Caco-2 (cell line): ENCODE measurements at regions of chr3 and their contacts with region 1.

Region 1: GRCh38 chr3:73086071-73086494 is 24.6 kb downstream of the EBLN2 start:
- DNase-seq: peak in 1 of 2 experiments; percentile 59
- H3K4me3 ChIP-seq: no peak overlapping the region
- H3K4me3 Mint-ChIP-seq: no peak overlapping the region
- H3K27ac Mint-ChIP-seq: no peak overlapping the region
- H3K4me1 ChIP-seq: no peaks in the 10 kb centered on the region
- H3K4me1 Mint-ChIP-seq: no peaks in the 10 kb centered on the region
- H3K27me3 ChIP-seq: no peaks in the 10 kb centered on the region
- H3K27me3 Mint-ChIP-seq: no peaks in the 10 kb centered on the region
- CTCF ChIP-seq: peak; percentile 79 to 85

Region 2: DNA sequence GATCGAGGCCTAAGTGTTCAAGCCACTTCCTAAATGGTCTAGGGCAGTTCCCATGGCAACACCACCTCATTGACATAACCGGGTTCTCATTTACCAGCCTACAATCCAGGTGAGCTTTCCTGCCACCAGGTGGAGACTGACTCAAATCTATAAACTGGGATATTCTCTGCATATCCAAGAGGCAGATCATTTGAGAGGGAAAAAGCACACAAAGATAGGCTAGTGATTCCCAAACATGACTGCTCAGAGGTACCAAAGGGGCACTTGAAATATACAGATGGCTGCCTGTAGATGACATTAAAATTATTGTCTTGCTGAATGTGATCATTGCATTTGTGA is 1159.9 kb before region 1 on chr3:
- CTCF ChIA-PET with region 1: no interaction called
- POLR2A ChIA-PET with region 1: no interaction called
- intact Hi-C with region 1: loop called (anchors 5 kb)
- DNase-seq: peak; percentile 67 to 71
- H3K4me3 ChIP-seq: no peak overlapping the region
- H3K4me3 Mint-ChIP-seq: no peak overlapping the region
- H3K27ac Mint-ChIP-seq: no peak overlapping the region
- H3K4me1 ChIP-seq: peaks cover 8% of the 10 kb centered on the region; the same call in 1 of the 2 replicates
- H3K4me1 Mint-ChIP-seq: peaks cover 9% of the 10 kb centered on the region
- H3K27me3 ChIP-seq: no peaks in the 10 kb centered on the region
- H3K27me3 Mint-ChIP-seq: peaks cover 8% of the 10 kb centered on the region
- CTCF ChIP-seq: peak; percentile 66 to 76

Region 3: DNA sequence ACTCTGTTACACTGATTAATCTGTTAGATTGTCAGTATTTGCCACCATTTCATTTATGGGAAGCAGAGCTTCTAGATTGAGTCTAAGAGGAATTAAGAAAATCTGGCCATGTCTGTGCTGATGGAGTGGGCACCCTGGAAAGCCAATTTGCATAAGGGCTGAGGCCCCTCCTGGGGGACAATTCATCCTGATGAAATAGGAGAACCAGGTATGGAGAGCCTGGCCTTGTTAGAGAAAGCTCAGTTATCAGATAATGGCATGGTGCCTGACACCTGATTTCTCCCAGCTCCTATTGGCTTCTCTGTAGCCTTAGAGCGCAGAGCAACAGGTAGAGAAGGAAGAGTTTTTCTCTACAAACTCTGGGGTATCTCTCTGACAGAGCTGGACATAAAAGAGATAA is 89.6 kb after region 1 on chr3:
- CTCF ChIA-PET with region 1: no interaction called
- POLR2A ChIA-PET with region 1: no interaction called
- intact Hi-C with region 1: no loop called
- DNase-seq: no peak
- H3K4me3 ChIP-seq: no peak overlapping the region
- H3K4me3 Mint-ChIP-seq: no peak overlapping the region
- H3K27ac Mint-ChIP-seq: no peak overlapping the region
- H3K4me1 ChIP-seq: no peaks in the 10 kb centered on the region
- H3K4me1 Mint-ChIP-seq: peaks cover 5% of the 10 kb centered on the region
- H3K27me3 ChIP-seq: no peaks in the 10 kb centered on the region
- H3K27me3 Mint-ChIP-seq: no peaks in the 10 kb centered on the region
- CTCF ChIP-seq: no peak

Region 4: DNA sequence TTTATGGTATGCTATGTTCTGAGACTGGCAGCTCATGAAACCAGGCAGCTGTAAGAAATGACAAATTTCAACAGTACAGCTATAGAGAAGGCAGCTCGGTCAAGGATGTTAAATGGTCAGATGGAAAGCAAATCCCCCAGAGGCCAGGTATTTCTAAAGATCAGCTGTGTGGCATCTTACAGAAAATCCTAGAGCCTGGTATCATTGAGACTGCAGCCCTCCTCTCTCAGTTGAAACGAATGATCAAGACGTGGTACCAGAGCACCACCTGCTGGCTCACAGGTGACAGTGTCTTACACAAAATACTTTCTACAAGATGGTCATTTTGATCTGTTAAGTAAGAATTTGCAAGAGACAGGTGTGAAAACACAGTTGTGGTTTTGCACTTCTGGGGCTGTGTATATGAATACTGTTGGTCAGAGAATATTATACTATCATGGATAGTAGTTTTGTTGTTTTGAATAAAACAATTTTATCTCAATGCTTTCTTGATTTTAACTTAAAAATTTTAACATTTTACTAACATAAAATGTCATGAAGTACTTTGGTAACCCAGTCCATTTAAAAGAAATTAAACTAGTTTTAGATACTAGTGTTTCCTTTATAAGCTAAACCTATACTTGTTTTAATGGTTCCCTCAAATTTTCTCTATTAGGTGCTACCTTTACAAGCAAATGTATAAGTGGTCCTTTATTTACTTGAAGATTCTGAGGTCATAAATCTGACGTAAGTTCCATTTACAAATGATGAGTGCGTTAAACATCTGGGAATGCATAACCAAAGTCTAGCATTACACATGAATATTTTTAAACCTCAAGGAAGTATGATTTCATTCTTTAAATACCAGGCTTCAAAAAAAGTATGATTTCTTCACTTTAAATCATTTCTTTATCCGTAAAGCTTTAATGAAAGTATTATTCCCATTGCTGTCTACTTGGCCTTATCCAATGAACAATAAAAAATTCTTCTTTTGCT is 416.8 kb after region 1 on chr3:
- CTCF ChIA-PET with region 1: no interaction called
- POLR2A ChIA-PET with region 1: no interaction called
- intact Hi-C with region 1: no loop called
- DNase-seq: peak; percentile 71 to 72
- H3K4me3 ChIP-seq: no peak overlapping the region
- H3K4me3 Mint-ChIP-seq: no peak overlapping the region
- H3K27ac Mint-ChIP-seq: no peak overlapping the region
- H3K4me1 ChIP-seq: peaks cover 14% of the 10 kb centered on the region
- H3K4me1 Mint-ChIP-seq: no peaks in the 10 kb centered on the region
- H3K27me3 ChIP-seq: no peaks in the 10 kb centered on the region
- H3K27me3 Mint-ChIP-seq: no peaks in the 10 kb centered on the region
- CTCF ChIP-seq: peak; percentile 72 to 85